CD4-positive, alpha-beta memory T cell (primary cell): ENCODE measurements at regions of chr2 and their contacts with region 1.

Region 1: GRCh38 chr2:178112202-178113152 is at the start of gene RBM45:
- DNase-seq: peak; percentile 76 to 82 (median 82)
- H3K4me3 ChIP-seq: peak within 1 kb of the TSS; percentile 80 to 92
- H3K4me3 Mint-ChIP-seq: peak within 1 kb of the TSS; percentile 87 to 96 (median 91)
- H3K27ac ChIP-seq: peak within 1 kb of the TSS; percentile 66
- H3K27ac Mint-ChIP-seq: peak within 1 kb of the TSS; percentile 82 to 95 (median 90)
- H3K4me1 ChIP-seq: peaks cover 28% of the 10 kb centered on the region
- H3K4me1 Mint-ChIP-seq: peaks cover 28 to 47% (median 39%) of the 10 kb centered on the region in 4 donors
- H3K27me3 ChIP-seq: no peaks in the 10 kb centered on the region
- H3K27me3 Mint-ChIP-seq: no peaks in the 10 kb centered on the region
- total RNA-seq, gene RBM45: 23.3 to 28.0 TPM

Region 2: GRCh38 chr2:177183860-177184259 is 928.6 kb before region 1 on chr2:
- CTCF ChIA-PET with region 1: no interaction called
- POLR2A ChIA-PET with region 1: no interaction called
- intact Hi-C with region 1: no loop called
- DNase-seq: no peak
- H3K4me3 ChIP-seq: no peak overlapping the region
- H3K4me3 Mint-ChIP-seq: peak overlapping the region in 1 of 8 donors; percentile 15
- H3K27ac ChIP-seq: no peak overlapping the region
- H3K27ac Mint-ChIP-seq: peak overlapping the region in 1 of 7 donors; percentile 48
- H3K4me1 ChIP-seq: no peaks in the 10 kb centered on the region
- H3K4me1 Mint-ChIP-seq: no peaks in the 10 kb centered on the region
- H3K27me3 ChIP-seq: no peaks in the 10 kb centered on the region
- H3K27me3 Mint-ChIP-seq: peaks cover 0 to 2% of the 10 kb centered on the region in 2 donors

Region 3: GRCh38 chr2:178101321-178102079 is 11.0 kb before region 1 on chr2:
- CTCF ChIA-PET with region 1: interaction called, 29 read pairs
- POLR2A ChIA-PET with region 1: no interaction called
- intact Hi-C with region 1: no loop called
- DNase-seq: no peak
- H3K4me3 ChIP-seq: no peak overlapping the region
- H3K4me3 Mint-ChIP-seq: no peak overlapping the region
- H3K27ac ChIP-seq: no peak overlapping the region
- H3K27ac Mint-ChIP-seq: no peak overlapping the region
- H3K4me1 ChIP-seq: no peaks in the 10 kb centered on the region
- H3K4me1 Mint-ChIP-seq: no peaks in the 10 kb centered on the region
- H3K27me3 ChIP-seq: no peaks in the 10 kb centered on the region
- H3K27me3 Mint-ChIP-seq: peaks cover 0 to 2% of the 10 kb centered on the region in 2 donors

Region 4: GRCh38 chr2:178128836-178129630 is 16.6 kb after region 1 on chr2:
- CTCF ChIA-PET with region 1: interaction called, 34 read pairs
- POLR2A ChIA-PET with region 1: interaction called, 4 read pairs
- intact Hi-C with region 1: no loop called
- DNase-seq: no peak
- H3K4me3 ChIP-seq: no peak overlapping the region
- H3K4me3 Mint-ChIP-seq: no peak overlapping the region
- H3K27ac ChIP-seq: no peak overlapping the region
- H3K27ac Mint-ChIP-seq: peak overlapping the region in 1 of 7 donors; percentile 37
- H3K4me1 ChIP-seq: no peaks in the 10 kb centered on the region
- H3K4me1 Mint-ChIP-seq: peaks cover 0 to 7% (median 5%) of the 10 kb centered on the region in 4 donors
- H3K27me3 ChIP-seq: no peaks in the 10 kb centered on the region
- H3K27me3 Mint-ChIP-seq: no peaks in the 10 kb centered on the region

Region 5: DNA sequence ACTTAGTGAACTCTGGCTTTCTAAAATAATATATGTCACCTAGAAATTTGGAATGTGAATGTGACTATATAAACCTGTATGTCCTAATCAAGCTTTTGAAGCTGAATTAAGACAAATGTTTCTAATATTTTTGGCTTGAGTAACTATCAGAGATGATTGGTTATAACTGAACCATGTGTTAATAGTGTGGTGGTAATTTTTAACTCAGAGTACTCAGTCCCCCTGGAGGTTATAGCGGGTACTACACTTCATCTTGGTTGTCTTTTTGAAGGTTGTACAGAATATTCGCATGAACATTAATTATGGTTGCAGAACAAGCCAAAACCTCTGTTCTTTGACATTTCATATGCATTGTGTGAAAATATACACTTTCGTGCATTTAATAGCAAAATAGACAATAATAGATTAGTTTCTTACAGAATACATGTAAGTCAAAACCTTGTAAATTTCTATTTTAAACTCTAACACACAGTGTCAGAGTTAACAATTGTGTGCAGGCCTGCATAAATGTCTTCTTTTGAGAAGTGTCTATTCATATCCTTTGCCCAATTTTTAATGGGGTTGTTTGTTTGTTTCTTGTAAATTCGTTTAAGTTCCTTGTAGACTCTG is 167.9 kb after region 1 on chr2:
- CTCF ChIA-PET with region 1: interaction called, 9 read pairs
- POLR2A ChIA-PET with region 1: no interaction called
- intact Hi-C with region 1: loop called (anchors 1 kb)
- DNase-seq: peak in 4 of 5 donors; percentile 35 to 42 (median 38)
- H3K4me3 ChIP-seq: no peak overlapping the region
- H3K4me3 Mint-ChIP-seq: no peak overlapping the region
- H3K27ac ChIP-seq: no peak overlapping the region
- H3K27ac Mint-ChIP-seq: peak overlapping the region in 1 of 7 donors; percentile 18
- H3K4me1 ChIP-seq: no peaks in the 10 kb centered on the region
- H3K4me1 Mint-ChIP-seq: no peaks in the 10 kb centered on the region
- H3K27me3 ChIP-seq: no peaks in the 10 kb centered on the region
- H3K27me3 Mint-ChIP-seq: peaks cover 11 to 16% of the 10 kb centered on the region in 2 donors

Region 6: DNA sequence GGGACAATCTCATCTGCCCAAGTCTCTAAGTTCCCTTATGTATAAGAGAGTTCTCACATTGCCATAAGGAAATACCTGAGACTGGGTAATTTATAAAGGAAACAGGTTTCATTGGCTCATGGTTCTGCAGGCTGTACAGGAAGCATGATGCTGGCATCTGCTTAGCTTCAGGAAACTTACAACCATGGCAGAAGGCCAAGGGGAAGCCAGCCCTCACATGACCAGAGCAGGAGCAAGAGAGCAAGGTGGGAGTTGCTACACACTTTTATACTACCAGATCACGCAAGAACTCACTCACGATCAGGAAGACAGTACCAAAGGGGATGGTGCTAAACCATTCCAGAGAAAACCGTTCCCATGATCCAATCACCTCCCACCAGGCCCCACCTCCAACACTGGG is 264.6 kb after region 1 on chr2:
- CTCF ChIA-PET with region 1: no interaction called
- POLR2A ChIA-PET with region 1: no interaction called
- intact Hi-C with region 1: no loop called
- DNase-seq: no peak
- H3K4me3 ChIP-seq: no peak overlapping the region
- H3K4me3 Mint-ChIP-seq: no peak overlapping the region
- H3K27ac ChIP-seq: no peak overlapping the region
- H3K27ac Mint-ChIP-seq: no peak overlapping the region
- H3K4me1 ChIP-seq: no peaks in the 10 kb centered on the region
- H3K4me1 Mint-ChIP-seq: no peaks in the 10 kb centered on the region
- H3K27me3 ChIP-seq: no peaks in the 10 kb centered on the region
- H3K27me3 Mint-ChIP-seq: peaks cover 18 to 19% of the 10 kb centered on the region in 2 donors

Region 7: GRCh38 chr2:178397002-178397605 is 284.6 kb after region 1 on chr2:
- CTCF ChIA-PET with region 1: interaction called, 3 read pairs
- POLR2A ChIA-PET with region 1: no interaction called
- intact Hi-C with region 1: loop called (anchors 5 kb)
- DNase-seq: peak in 4 of 5 donors; percentile 32 to 47 (median 37)
- H3K4me3 ChIP-seq: no peak overlapping the region
- H3K4me3 Mint-ChIP-seq: no peak overlapping the region
- H3K27ac ChIP-seq: no peak overlapping the region
- H3K27ac Mint-ChIP-seq: no peak overlapping the region
- H3K4me1 ChIP-seq: no peaks in the 10 kb centered on the region
- H3K4me1 Mint-ChIP-seq: no peaks in the 10 kb centered on the region
- H3K27me3 ChIP-seq: no peaks in the 10 kb centered on the region
- H3K27me3 Mint-ChIP-seq: peaks cover 0 to 3% of the 10 kb centered on the region in 2 donors

Region 8: DNA sequence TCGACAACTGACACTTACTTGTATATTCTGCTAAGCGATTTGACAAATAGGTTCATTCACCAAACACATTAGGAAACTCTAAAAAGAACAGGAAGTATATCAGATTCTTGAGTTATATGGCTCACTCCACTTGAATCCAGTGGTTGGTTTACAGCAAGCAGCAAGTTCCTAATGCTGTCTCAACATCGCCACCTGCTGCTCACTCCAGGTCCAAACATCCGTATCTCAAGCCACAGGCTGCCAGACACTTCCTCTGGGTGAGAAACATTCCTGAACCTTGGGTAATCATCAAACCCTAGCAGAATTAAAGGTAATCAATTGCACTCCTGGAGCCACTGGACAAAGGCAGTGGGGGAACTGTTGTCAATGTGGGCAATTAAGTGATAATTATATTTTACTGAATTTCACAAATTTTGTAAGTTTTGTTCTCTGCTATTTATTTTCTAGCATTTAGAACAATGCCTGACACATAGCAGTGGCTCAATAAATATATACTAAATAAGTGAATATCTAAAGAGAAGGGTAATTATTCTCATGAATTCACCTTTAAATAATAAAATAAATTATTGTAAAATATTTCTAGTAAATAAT is 801.9 kb after region 1 on chr2:
- CTCF ChIA-PET with region 1: no interaction called
- POLR2A ChIA-PET with region 1: no interaction called
- intact Hi-C with region 1: loop called (anchors 5 kb)
- DNase-seq: peak; percentile 37 to 53 (median 44)
- H3K4me3 ChIP-seq: no peak overlapping the region
- H3K4me3 Mint-ChIP-seq: no peak overlapping the region
- H3K27ac ChIP-seq: no peak overlapping the region
- H3K27ac Mint-ChIP-seq: peak overlapping the region in 1 of 7 donors; percentile 84
- H3K4me1 ChIP-seq: no peaks in the 10 kb centered on the region
- H3K4me1 Mint-ChIP-seq: peaks cover 0 to 1% (median 0%) of the 10 kb centered on the region in 4 donors
- H3K27me3 ChIP-seq: no peaks in the 10 kb centered on the region
- H3K27me3 Mint-ChIP-seq: peaks cover 1 to 2% of the 10 kb centered on the region in 2 donors